ENCODE measurements at regions of chr9 and their contacts with region 1.

Region 1: GRCh38 chr9:128504485-128505413 is at the start of gene GLE1:
- DNase-seq: peak; percentile 89 to 97 (median 94)
- H3K4me3 ChIP-seq: peak within 1 kb of the TSS; percentile 57 to 100 (median 92)
- H3K27ac ChIP-seq: peak within 1 kb of the TSS in 56 of 59 donors; percentile 14 to 89 (median 75)
- H3K27me3 ChIP-seq: no peaks in the 10 kb centered on the region
- CTCF ChIP-seq: peak in 18 of 56 donors; percentile 4 to 54 (median 34)
- total RNA-seq, gene GLE1: 11.7 to 22.4 (median 16.7) TPM

Region 2: DNA sequence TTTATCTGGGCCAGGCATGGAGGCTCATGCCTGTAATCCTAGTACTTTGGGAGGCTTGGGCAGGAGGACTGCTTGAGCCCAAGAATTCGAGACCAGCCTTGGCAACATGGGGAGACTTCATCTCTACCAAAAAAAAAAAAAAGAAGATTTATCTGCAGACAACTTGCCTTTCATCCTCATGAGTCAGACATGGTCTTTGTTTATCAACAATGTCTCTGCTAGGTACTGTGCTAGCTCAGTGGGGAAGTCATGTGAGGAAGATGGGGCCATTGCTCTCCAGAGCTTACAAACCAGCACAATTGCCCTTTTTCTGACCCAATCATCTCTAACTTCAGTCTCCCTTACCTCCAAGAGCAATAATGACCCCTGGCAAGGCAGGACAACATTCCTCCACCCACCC is 132.0 kb before region 1 on chr9:
- intact Hi-C with region 1: no loop called
- DNase-seq: no peak
- H3K4me3 ChIP-seq: peak overlapping the region in 18 of 59 donors; percentile 70 to 96 (median 92)
- H3K27ac ChIP-seq: peak overlapping the region; percentile 58 to 100 (median 97)
- H3K27me3 ChIP-seq: no peaks in the 10 kb centered on the region
- CTCF ChIP-seq: no peak

Region 3: GRCh38 chr9:128455849-128456612 is 48.7 kb before region 1 on chr9 and contains the start of gene ODF2:
- intact Hi-C with region 1: loop called in 1 of 2 experiments (anchors 10 kb)
- DNase-seq: peak; percentile 98 to 100 (median 98)
- H3K4me3 ChIP-seq: peak within 1 kb of the TSS; percentile 52 to 96 (median 87)
- H3K27ac ChIP-seq: peak within 1 kb of the TSS in 46 of 59 donors; percentile 19 to 87 (median 67)
- H3K27me3 ChIP-seq: no peaks in the 10 kb centered on the region
- CTCF ChIP-seq: peak in 11 of 56 donors; percentile 8 to 41 (median 21)
- total RNA-seq, gene ODF2: 20.1 to 43.4 (median 28.1) TPM